Naive thymus-derived CD4-positive, alpha-beta T cell (primary cell): ENCODE measurements at regions of chr18 and their contacts with region 1.

Region 1: DNA sequence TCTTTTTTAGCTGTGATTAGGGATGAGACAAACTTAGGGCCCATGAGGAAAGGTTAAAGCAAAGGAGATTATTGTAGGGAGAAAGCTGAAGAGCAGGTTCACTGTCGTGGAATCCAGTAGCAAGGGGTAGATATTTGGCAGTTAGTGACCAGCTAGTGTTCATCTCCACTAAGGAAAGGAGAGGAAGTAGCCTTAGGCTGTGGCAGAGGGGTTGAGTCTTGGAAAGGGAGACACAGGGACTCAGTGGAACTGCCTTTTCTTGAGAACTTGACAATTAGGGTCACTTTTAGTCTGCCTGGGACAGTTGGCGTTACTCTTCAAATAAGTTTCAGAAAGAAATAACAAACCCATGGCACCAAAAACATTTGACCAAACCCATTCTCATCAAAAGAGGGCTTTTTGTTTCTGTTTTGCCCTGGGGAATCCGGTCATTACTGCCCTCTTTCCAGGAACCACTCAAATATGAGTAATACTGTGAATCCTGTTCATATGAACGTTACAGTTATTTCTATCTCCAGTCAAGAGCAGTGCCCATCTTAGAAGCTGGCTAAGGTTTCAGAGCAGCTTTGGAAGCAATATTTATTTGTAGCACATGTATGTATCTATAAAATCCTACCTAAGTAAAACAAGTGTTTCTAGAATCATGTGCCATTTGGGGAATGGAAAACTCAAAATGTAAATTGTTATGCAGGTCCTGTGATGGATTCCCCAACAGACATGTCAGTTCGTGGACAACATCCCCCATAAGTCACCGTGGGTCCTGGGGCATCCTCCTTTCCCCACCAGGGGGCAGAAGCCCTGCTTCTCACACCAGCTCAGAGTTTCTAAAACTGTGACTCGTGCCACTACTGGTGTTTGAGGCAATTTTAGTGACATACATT is 77.3 kb upstream of the PHLPP1 start:
- DNase-seq: peak; percentile 7 to 49 (median 27)
- ATAC-seq: peak; percentile 76
- H3K4me3 ChIP-seq: no peak overlapping the region
- H3K4me3 Mint-ChIP-seq: no peak overlapping the region
- H3K27ac ChIP-seq: no peak overlapping the region
- H3K27ac Mint-ChIP-seq: no peak overlapping the region
- H3K4me1 ChIP-seq: no peaks in the 10 kb centered on the region
- H3K4me1 Mint-ChIP-seq: peaks cover 0 to 14% (median 0%) of the 10 kb centered on the region in 7 donors
- H3K27me3 ChIP-seq: no peaks in the 10 kb centered on the region
- H3K27me3 Mint-ChIP-seq: peaks cover 18 to 30% (median 24%) of the 10 kb centered on the region in 5 donors

Region 2: GRCh38 chr18:62576845-62577512 is 61.1 kb before region 1 on chr18:
- CTCF ChIA-PET with region 1: no interaction called
- POLR2A ChIA-PET with region 1: no interaction called
- intact Hi-C with region 1: no loop called
- DNase-seq: no peak
- ATAC-seq: no peak
- H3K4me3 ChIP-seq: no peak overlapping the region
- H3K4me3 Mint-ChIP-seq: no peak overlapping the region
- H3K27ac ChIP-seq: no peak overlapping the region
- H3K27ac Mint-ChIP-seq: peak overlapping the region in 3 of 9 donors; percentile 31 to 86 (median 64)
- H3K4me1 ChIP-seq: no peaks in the 10 kb centered on the region
- H3K4me1 Mint-ChIP-seq: peaks cover 0 to 30% (median 4%) of the 10 kb centered on the region in 7 donors
- H3K27me3 ChIP-seq: no peaks in the 10 kb centered on the region
- H3K27me3 Mint-ChIP-seq: no peaks in the 10 kb centered on the region

Region 3: GRCh38 chr18:62957885-62958472 is 319.9 kb after region 1 on chr18:
- CTCF ChIA-PET with region 1: no interaction called
- POLR2A ChIA-PET with region 1: no interaction called
- intact Hi-C with region 1: loop called in 1 of 2 experiments (anchors 1 kb)
- DNase-seq: peak in 6 of 9 donors; percentile 18 to 46 (median 28)
- ATAC-seq: peak; percentile 64
- H3K4me3 ChIP-seq: no peak overlapping the region
- H3K4me3 Mint-ChIP-seq: no peak overlapping the region
- H3K27ac ChIP-seq: no peak overlapping the region
- H3K27ac Mint-ChIP-seq: no peak overlapping the region
- H3K4me1 ChIP-seq: peaks cover 0 to 17% of the 10 kb centered on the region in 2 donors
- H3K4me1 Mint-ChIP-seq: peaks cover 11 to 22% (median 17%) of the 10 kb centered on the region in 7 donors
- H3K27me3 ChIP-seq: no peaks in the 10 kb centered on the region
- H3K27me3 Mint-ChIP-seq: no peaks in the 10 kb centered on the region